Activated naive CD4-positive, alpha-beta T cell treated with anti-CD3 and anti-CD28 coated beads for 36 hours (primary cell): ENCODE measurements at regions of chr4 and their contacts with region 1.

Region 1: DNA sequence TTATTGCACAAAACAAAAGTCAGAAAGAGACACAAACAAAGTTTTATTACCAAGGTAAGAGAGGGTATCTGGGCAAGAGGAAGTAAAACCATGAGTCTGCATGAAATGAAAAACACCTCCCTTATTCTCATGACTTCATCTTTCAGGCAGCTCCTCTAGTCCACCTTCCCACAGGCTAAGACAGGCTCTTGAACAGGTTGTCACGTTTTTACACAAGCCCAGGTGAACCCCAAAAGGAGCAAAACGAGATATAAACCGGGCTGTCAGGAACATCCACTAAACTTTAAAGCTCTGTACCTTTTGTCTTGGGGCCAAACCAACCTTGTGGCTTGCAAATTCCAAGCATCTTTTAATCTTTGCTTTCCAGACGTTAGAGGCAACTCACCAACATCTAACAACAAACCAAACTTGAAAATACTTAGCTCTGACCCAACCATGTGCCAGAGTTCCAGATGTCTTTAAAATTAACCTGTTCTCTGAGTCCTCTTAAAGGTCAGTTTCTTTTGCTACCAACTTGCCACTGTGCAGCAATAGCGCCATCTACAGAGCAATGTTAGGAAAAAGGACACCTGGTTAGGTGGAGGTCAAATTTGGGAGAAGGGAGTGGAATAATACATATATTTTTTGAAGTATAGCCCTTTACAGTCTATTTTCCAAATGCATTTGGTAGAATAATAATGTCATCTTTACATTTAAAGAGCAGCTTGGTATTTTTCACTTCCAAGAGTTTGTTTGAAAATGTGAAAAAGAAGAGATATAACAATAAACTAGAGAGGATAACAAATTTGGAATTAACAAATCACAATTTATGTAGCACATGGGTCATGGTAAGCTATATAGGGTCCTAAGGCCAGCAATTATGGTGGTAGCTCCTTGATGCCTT is 73.1 kb downstream of the QRFPR start:
- DNase-seq: peak; percentile 71
- H3K4me3 Mint-ChIP-seq: no peak overlapping the region
- H3K27ac Mint-ChIP-seq: no peak overlapping the region
- H3K4me1 Mint-ChIP-seq: peaks cover 15% of the 10 kb centered on the region
- H3K27me3 Mint-ChIP-seq: no peaks in the 10 kb centered on the region

Region 2: DNA sequence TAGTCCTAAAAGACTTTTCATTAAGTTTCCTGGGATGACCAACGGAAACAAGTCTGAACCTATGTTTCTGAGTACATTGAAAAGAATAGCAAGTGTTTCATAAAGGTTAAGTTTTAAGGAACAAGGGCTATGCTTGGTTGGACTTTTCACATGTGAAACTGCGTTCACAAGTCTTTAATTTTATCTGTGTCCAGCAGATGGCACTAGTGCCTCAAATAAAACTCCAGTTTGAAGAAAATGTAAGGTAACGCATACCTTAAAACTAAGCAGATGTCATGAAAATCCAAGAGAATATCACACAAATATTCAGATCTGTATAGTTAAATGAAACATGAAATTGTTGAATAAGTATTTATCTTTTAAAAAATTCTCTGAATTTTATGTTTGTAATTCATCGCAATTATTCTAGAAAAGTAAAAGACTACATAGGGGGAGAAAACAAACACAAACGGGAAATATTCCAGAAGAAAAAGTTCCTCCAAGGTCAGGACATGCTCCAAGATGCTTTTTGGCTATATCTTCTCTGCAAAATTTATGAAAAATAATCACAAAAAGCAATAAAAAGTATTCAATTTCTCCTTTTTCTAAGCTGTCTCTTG is 1151.5 kb before region 1 on chr4:
- CTCF ChIA-PET with region 1: interaction called, 4 read pairs
- intact Hi-C with region 1: loop called (anchors 1 kb)
- DNase-seq: peak; percentile 32
- H3K4me3 Mint-ChIP-seq: no peak overlapping the region
- H3K27ac Mint-ChIP-seq: no peak overlapping the region
- H3K4me1 Mint-ChIP-seq: no peaks in the 10 kb centered on the region
- H3K27me3 Mint-ChIP-seq: no peaks in the 10 kb centered on the region

Region 3: GRCh38 chr4:120922381-120923206 is 385.1 kb before region 1 on chr4 and contains the start of gene PRDM5:
- CTCF ChIA-PET with region 1: no interaction called
- intact Hi-C with region 1: loop called (anchors 5 kb)
- DNase-seq: peak; percentile 40
- H3K4me3 Mint-ChIP-seq: peak within 1 kb of the TSS; percentile 73
- H3K27ac Mint-ChIP-seq: peak within 1 kb of the TSS; percentile 54
- H3K4me1 Mint-ChIP-seq: peaks cover 13% of the 10 kb centered on the region
- H3K27me3 Mint-ChIP-seq: peaks cover 4% of the 10 kb centered on the region
- total RNA-seq, gene PRDM5: 0.20 to 0.57 TPM

Region 4: DNA sequence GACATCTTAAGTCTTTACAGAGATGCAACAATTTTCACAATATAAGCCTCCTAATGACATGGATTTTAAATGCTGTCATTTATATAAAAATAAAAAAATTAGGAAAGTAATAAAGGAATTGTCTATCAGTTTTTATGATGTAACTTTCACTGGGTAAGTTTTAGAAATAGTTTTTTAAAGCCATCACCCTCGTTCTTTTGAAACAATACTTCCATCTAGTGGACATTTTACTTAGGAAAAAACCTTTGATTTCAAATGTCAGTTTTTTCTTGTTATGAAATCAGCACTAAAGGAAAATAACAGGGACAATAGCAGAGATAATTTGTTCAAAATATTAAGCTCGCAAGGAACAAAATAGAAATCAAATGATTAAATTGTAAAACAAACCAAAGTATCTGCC is 211.1 kb before region 1 on chr4:
- CTCF ChIA-PET with region 1: interaction called, 3 read pairs
- intact Hi-C with region 1: loop called (anchors 2 kb)
- DNase-seq: no peak
- H3K4me3 Mint-ChIP-seq: no peak overlapping the region
- H3K27ac Mint-ChIP-seq: no peak overlapping the region
- H3K4me1 Mint-ChIP-seq: no peaks in the 10 kb centered on the region
- H3K27me3 Mint-ChIP-seq: no peaks in the 10 kb centered on the region

Region 5: DNA sequence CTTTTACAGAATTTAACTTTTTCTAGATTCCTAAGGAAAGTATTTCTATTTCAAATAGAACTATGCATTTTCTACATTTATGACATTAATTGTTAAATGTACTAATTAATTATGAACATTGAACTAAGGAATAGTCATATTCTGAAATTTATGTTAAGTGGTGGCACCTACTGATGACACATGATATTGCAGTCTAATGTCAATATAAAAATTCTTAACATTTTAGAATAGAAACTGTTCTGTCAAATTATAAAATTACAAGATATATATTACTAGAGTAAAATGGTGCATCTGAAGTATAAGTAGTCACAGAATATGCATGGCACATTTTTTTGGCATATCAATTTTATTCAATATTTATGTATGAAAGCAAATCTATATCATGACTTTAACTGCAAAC is 195.2 kb before region 1 on chr4:
- CTCF ChIA-PET with region 1: interaction called, 4 read pairs
- intact Hi-C with region 1: loop called (anchors 5 kb)
- DNase-seq: no peak
- H3K4me3 Mint-ChIP-seq: no peak overlapping the region
- H3K27ac Mint-ChIP-seq: no peak overlapping the region
- H3K4me1 Mint-ChIP-seq: peaks cover 22% of the 10 kb centered on the region
- H3K27me3 Mint-ChIP-seq: no peaks in the 10 kb centered on the region

Region 6: DNA sequence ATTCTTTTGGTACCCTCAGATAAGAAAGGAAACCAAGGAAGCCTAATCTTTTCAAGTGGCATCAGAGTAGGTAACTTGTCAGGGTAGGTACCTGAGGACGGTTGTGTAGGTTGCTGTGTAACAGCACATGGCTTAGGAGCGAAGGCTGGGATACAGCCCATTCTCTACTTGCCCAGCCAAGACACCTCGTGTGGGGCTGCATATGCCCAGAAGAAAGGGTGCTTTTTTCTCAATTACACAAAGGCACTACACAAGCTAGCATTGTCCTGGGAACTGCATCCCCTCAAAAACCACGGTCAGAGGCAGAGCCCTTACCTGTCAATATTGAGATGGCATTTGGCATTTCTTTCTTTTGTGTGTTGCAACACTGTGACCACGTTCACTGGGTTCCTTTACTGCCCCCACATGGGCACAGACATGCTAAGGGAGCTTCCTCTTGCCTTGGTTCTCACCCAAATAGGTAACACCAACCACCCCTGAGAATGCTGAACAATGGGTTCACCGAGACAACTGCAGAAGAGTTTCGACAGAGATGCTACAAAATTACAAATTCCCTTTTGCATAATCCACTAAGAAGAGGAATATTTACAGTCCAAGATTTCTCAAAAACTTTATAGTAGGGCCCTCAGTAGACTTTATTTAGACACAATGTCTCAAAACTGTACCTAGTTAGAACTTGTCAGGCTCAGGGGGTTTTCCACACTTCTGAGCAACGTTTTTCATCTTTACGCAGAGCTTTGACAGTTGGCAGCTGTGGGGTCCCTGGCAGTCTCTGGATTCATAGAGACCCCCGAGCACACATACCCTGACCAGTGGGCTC is 107.7 kb before region 1 on chr4:
- CTCF ChIA-PET with region 1: interaction called, 26 read pairs
- intact Hi-C with region 1: no loop called
- DNase-seq: peak; percentile 69
- H3K4me3 Mint-ChIP-seq: no peak overlapping the region
- H3K27ac Mint-ChIP-seq: peak overlapping the region; percentile 62
- H3K4me1 Mint-ChIP-seq: peaks cover 24% of the 10 kb centered on the region
- H3K27me3 Mint-ChIP-seq: no peaks in the 10 kb centered on the region

Region 7: GRCh38 chr4:121272526-121272925 is 35.2 kb before region 1 on chr4:
- CTCF ChIA-PET with region 1: interaction called, 18 read pairs
- intact Hi-C with region 1: no loop called
- DNase-seq: no peak
- H3K4me3 Mint-ChIP-seq: no peak overlapping the region
- H3K27ac Mint-ChIP-seq: no peak overlapping the region
- H3K4me1 Mint-ChIP-seq: peaks cover 6% of the 10 kb centered on the region
- H3K27me3 Mint-ChIP-seq: peaks cover 1% of the 10 kb centered on the region